Activated CD4-positive, alpha-beta T cell treated with anti-CD3 and anti-CD28 coated beads for 36 hours (primary cell): ENCODE measurements at regions of chr1 and their contacts with region 1.

Region 1: GRCh38 chr1:235415008-235415904 is 48.0 kb downstream of the TBCE start:
- DNase-seq: peak; percentile 78
- ATAC-seq: peak; percentile 84
- H3K4me3 Mint-ChIP-seq: no peak overlapping the region
- H3K27ac Mint-ChIP-seq: no peak overlapping the region
- H3K4me1 Mint-ChIP-seq: no peaks in the 10 kb centered on the region
- H3K27me3 Mint-ChIP-seq: no peaks in the 10 kb centered on the region

Region 2: GRCh38 chr1:234486498-234487448 is 928.5 kb before region 1 on chr1:
- CTCF ChIA-PET with region 1: no interaction called
- POLR2A ChIA-PET with region 1: no interaction called
- intact Hi-C with region 1: loop called in 1 of 2 experiments (anchors 1 kb)
- DNase-seq: peak; percentile 61
- ATAC-seq: peak; percentile 16
- H3K4me3 Mint-ChIP-seq: no peak overlapping the region
- H3K27ac Mint-ChIP-seq: peak overlapping the region; percentile 98
- H3K4me1 Mint-ChIP-seq: peaks cover 43% of the 10 kb centered on the region
- H3K27me3 Mint-ChIP-seq: peaks cover 16% of the 10 kb centered on the region

Region 3: DNA sequence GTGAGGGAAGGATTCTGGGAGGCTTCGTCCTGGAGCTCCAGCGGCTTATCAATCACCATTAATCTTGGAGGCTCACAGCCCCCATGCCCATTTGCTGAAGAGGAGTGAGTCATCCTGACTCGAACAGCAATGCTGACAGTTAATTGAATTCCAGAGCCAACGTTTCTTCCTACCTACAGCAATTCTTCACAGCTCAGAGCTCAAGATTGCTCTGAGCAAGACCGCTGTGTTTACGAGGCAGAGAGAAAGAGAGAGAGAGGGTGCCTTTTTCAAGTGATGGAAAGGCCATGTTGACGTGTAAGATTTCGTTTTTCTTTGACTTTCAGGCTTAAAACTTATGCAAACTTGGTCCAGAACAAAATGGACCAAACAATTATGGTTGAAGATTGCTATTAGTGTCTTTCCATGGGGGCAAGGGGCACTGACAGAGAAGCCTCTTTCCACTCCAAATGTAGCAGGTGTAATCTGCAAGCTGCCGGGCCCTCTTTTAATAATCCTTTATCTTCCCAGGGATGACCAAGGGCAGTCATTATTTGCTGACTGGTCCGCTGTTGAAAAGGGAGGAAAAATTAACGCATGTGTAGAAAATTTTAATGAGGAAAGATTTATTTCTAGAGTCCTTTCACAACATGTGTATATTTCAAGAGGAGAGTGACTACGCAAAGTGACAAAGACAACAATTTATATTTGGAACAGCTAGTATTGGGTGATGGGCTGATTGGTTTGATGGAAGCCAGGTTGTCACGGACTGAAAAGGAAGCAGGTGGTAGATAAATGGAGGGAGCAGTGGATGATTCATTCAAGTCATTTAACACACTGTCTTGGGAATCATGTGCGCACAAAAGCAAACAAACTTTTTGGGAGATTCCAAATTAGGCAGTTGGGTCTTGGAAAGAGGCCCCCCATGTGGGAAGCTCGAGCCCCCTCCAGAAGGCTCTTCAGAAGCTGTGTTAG is 669.1 kb before region 1 on chr1:
- CTCF ChIA-PET with region 1: no interaction called
- POLR2A ChIA-PET with region 1: no interaction called
- intact Hi-C with region 1: no loop called
- DNase-seq: no peak
- ATAC-seq: no peak
- H3K4me3 Mint-ChIP-seq: no peak overlapping the region
- H3K27ac Mint-ChIP-seq: no peak overlapping the region
- H3K4me1 Mint-ChIP-seq: no peaks in the 10 kb centered on the region
- H3K27me3 Mint-ChIP-seq: no peaks in the 10 kb centered on the region

Region 4: GRCh38 chr1:235160957-235161684 is 254.1 kb before region 1 on chr1 and contains the start of gene RBM34:
- CTCF ChIA-PET with region 1: interaction called, 16 read pairs
- POLR2A ChIA-PET with region 1: interaction called, 11 read pairs
- intact Hi-C with region 1: loop called (anchors 1 to 10 kb)
- DNase-seq: peak; percentile 97
- ATAC-seq: peak; percentile 91
- H3K4me3 Mint-ChIP-seq: peak within 1 kb of the TSS; percentile 93
- H3K27ac Mint-ChIP-seq: peak within 1 kb of the TSS; percentile 95
- H3K4me1 Mint-ChIP-seq: peaks cover 15% of the 10 kb centered on the region
- H3K27me3 Mint-ChIP-seq: no peaks in the 10 kb centered on the region
- total RNA-seq, gene RBM34: 126 to 154 TPM

Region 5: GRCh38 chr1:235246022-235246991 is 168.9 kb before region 1 on chr1:
- CTCF ChIA-PET with region 1: interaction called, 80 read pairs
- POLR2A ChIA-PET with region 1: no interaction called
- intact Hi-C with region 1: no loop called
- DNase-seq: no peak
- ATAC-seq: peak; percentile 50
- H3K4me3 Mint-ChIP-seq: no peak overlapping the region
- H3K27ac Mint-ChIP-seq: peak overlapping the region; percentile 52
- H3K4me1 Mint-ChIP-seq: peaks cover 40% of the 10 kb centered on the region
- H3K27me3 Mint-ChIP-seq: no peaks in the 10 kb centered on the region

Region 6: DNA sequence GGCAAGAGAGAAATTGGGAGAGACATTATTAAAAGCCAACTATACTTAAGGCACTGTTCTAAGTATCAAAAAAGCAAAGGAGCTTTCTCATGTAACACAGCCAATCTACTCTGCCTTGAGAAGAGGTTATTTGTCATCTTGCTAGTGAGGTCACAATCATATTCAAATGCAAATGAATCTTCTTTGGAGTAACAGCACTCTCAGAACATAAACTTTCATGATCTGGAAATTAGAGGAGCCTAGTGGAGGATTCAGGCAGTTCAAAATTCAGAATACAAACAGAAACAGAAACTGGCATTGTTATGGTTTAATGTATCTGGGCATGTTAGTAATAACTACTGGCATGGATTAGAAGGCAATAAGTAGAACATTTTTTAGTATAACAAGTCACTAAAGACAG is 144.6 kb before region 1 on chr1:
- CTCF ChIA-PET with region 1: interaction called, 15 read pairs
- POLR2A ChIA-PET with region 1: no interaction called
- intact Hi-C with region 1: no loop called
- DNase-seq: no peak
- ATAC-seq: peak; percentile 89
- H3K4me3 Mint-ChIP-seq: no peak overlapping the region
- H3K27ac Mint-ChIP-seq: peak overlapping the region; percentile 64
- H3K4me1 Mint-ChIP-seq: peaks cover 60% of the 10 kb centered on the region
- H3K27me3 Mint-ChIP-seq: no peaks in the 10 kb centered on the region

Region 7: DNA sequence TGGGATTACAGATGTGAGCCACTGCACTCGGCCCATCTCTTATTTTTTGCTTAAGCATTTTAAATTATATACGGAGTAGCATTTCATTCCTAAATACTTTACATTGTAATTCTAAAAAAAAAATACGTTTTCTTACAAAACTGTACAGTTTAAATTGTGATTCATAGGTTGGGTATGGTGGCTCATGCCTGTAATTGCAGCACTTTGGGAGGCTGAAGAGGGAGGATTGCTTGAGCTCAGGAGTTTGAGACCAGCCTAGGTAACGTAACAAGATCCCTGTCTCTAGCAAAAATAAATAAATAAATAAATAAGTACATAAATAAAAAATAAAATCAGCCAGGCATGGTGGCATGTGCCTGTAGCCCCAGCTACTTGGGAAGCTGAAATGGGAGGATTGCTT is 23.4 kb before region 1 on chr1:
- CTCF ChIA-PET with region 1: interaction called, 15 read pairs
- POLR2A ChIA-PET with region 1: no interaction called
- intact Hi-C with region 1: no loop called
- DNase-seq: no peak
- ATAC-seq: no peak
- H3K4me3 Mint-ChIP-seq: no peak overlapping the region
- H3K27ac Mint-ChIP-seq: no peak overlapping the region
- H3K4me1 Mint-ChIP-seq: no peaks in the 10 kb centered on the region
- H3K27me3 Mint-ChIP-seq: no peaks in the 10 kb centered on the region

Region 8: DNA sequence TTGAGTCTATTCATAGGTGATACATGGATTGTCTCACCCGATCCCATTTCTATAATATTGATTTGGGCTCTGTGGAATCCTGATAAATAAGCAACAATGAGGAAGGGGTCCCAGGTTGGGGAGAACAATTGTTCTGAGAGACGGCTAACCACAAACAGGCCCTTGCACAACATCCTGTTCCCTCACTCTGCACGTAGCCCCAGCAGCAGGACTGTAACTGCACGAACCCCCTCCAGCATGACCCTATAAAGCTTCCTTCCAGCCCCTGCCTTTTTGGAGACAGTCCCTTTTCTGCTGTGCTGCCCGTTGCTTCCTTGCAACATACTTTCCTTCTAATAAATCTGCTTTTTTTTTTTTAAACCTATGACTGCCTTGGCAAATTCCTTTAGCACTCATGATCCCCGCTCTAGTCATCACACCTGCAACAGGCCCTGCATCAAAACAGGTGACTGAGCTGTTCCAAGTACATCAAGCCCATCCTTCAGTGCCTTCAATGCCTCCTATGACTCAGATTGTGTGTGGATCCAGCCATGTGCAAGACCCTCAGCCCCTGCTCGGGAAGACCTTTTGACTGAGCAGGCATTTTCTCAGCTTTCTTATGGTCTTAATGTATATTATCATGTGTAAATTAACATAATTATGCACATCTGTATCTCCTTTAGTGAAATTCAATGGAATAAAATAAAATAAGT is 152.7 kb after region 1 on chr1:
- CTCF ChIA-PET with region 1: no interaction called
- POLR2A ChIA-PET with region 1: no interaction called
- intact Hi-C with region 1: no loop called
- DNase-seq: peak; percentile 30
- ATAC-seq: peak; percentile 61
- H3K4me3 Mint-ChIP-seq: no peak overlapping the region
- H3K27ac Mint-ChIP-seq: no peak overlapping the region
- H3K4me1 Mint-ChIP-seq: peaks cover 12% of the 10 kb centered on the region
- H3K27me3 Mint-ChIP-seq: no peaks in the 10 kb centered on the region

Region 9: DNA sequence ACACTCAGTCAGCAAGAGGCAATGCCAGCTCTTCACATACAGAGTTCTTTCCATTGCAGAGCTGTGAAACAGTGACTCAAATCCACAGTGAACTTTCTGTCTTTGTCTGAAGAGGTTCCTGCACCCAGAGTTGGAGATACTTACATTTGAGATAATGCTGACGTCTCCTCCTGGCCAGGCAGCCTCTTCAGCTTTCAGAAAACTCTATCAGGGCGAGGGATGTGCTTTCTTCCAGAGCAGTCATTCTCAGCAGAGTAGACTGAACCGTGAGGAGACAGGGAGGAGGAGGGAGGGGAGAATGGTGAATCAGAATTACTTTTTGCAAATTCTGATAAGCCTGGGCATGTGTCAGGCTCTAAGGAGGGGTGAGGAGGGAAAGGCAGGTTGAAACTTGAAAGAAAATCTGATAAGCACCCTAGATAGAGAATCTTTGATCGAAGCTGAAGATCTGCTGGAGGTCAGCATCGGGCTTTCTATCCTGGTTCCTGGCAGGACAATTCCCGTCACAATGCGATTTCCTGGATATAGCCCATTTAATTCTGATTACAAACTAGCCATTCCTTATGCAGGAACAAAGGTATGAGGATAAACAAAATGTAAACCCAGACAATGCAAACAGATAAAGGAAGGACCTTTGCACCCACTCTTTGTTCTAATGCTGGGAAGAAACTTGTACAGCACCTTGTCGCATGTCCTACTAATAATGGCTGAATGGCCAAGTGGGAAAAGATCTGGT is 668.6 kb after region 1 on chr1:
- CTCF ChIA-PET with region 1: no interaction called
- POLR2A ChIA-PET with region 1: no interaction called
- intact Hi-C with region 1: no loop called
- DNase-seq: peak; percentile 34
- ATAC-seq: peak; percentile 84
- H3K4me3 Mint-ChIP-seq: no peak overlapping the region
- H3K27ac Mint-ChIP-seq: no peak overlapping the region
- H3K4me1 Mint-ChIP-seq: peaks cover 8% of the 10 kb centered on the region
- H3K27me3 Mint-ChIP-seq: peaks cover 6% of the 10 kb centered on the region